Activated CD4-positive, alpha-beta memory T cell treated with anti-CD3 and anti-CD28 coated beads, Interleukin-2, amount 10 ng/mL, durations not matched to agents 7 days and 5 days (primary cell): ENCODE measurements at regions of chr1 and their contacts with region 1.

Region 1: DNA sequence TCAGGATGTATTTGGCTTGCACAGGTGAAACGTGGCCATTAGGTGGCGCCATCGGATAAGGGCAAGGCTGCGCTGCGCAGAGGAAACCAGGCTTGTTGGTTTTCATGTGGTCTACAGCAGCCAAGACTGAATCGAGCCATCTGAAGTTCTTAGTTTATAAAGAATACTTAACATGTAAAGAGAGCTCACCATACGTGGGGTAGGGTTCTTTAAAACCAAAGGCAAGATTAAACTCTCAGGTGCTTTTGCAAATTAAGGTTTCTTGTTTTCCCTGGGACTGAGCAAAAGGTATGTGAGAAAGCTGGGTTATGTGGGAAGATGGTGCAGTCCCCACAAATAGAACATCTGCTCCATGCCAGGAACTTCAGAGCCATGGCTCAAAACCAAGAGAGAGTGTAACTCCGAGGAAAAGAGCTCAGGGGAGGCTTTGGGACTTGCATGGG is 9.3 kb downstream of the MASP2 start:
- DNase-seq: peak; percentile 89
- H3K4me3 Mint-ChIP-seq: no peak overlapping the region
- H3K27ac Mint-ChIP-seq: no peak overlapping the region
- H3K4me1 Mint-ChIP-seq: peaks cover 8% of the 10 kb centered on the region
- H3K27me3 Mint-ChIP-seq: peaks cover 3% of the 10 kb centered on the region

Region 2: DNA sequence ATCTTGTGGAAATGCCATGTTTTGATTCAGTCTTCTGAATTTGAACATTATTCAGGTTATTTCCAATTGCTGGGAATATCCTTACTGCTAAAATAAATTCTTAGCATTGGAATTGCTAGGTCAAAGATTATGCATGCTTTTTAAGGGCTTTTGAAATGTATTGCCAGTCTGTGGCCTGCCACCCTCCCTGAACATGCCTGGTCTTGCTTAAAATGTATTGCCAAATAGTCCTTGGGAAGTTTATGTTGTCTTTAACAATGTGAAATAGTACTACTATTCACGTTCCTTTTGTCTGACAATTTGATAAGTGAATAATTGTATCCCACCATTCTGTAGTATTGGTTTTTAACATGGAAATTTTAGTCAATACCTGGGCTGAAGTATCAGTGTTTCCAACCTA is 11.7 kb before region 1 on chr1:
- CTCF ChIA-PET with region 1: interaction called, 15 read pairs
- POLR2A ChIA-PET with region 1: no interaction called
- DNase-seq: no peak
- H3K4me3 Mint-ChIP-seq: no peak overlapping the region
- H3K27ac Mint-ChIP-seq: no peak overlapping the region
- H3K4me1 Mint-ChIP-seq: peaks cover 21% of the 10 kb centered on the region
- H3K27me3 Mint-ChIP-seq: no peaks in the 10 kb centered on the region

Region 3: GRCh38 chr1:11059990-11060830 is 22.4 kb after region 1 on chr1 and contains the start of gene SRM:
- CTCF ChIA-PET with region 1: interaction called, 72 read pairs
- POLR2A ChIA-PET with region 1: interaction called, 18 read pairs
- DNase-seq: peak; percentile 92
- H3K4me3 Mint-ChIP-seq: peak within 1 kb of the TSS; percentile 97
- H3K27ac Mint-ChIP-seq: peak within 1 kb of the TSS; percentile 85
- H3K4me1 Mint-ChIP-seq: peaks cover 51% of the 10 kb centered on the region
- H3K27me3 Mint-ChIP-seq: no peaks in the 10 kb centered on the region
- total RNA-seq, gene SRM: 69.3 to 72.1 TPM

Region 4: GRCh38 chr1:11078631-11079030 is 40.9 kb after region 1 on chr1:
- CTCF ChIA-PET with region 1: interaction called, 20 read pairs
- POLR2A ChIA-PET with region 1: no interaction called
- DNase-seq: no peak
- H3K4me3 Mint-ChIP-seq: no peak overlapping the region
- H3K27ac Mint-ChIP-seq: no peak overlapping the region
- H3K4me1 Mint-ChIP-seq: no peaks in the 10 kb centered on the region
- H3K27me3 Mint-ChIP-seq: no peaks in the 10 kb centered on the region

Region 5: GRCh38 chr1:11109047-11109760 is 71.4 kb after region 1 on chr1:
- CTCF ChIA-PET with region 1: interaction called, 13 read pairs
- POLR2A ChIA-PET with region 1: no interaction called
- DNase-seq: no peak
- H3K4me3 Mint-ChIP-seq: no peak overlapping the region
- H3K27ac Mint-ChIP-seq: no peak overlapping the region
- H3K4me1 Mint-ChIP-seq: no peaks in the 10 kb centered on the region
- H3K27me3 Mint-ChIP-seq: no peaks in the 10 kb centered on the region

Region 6: DNA sequence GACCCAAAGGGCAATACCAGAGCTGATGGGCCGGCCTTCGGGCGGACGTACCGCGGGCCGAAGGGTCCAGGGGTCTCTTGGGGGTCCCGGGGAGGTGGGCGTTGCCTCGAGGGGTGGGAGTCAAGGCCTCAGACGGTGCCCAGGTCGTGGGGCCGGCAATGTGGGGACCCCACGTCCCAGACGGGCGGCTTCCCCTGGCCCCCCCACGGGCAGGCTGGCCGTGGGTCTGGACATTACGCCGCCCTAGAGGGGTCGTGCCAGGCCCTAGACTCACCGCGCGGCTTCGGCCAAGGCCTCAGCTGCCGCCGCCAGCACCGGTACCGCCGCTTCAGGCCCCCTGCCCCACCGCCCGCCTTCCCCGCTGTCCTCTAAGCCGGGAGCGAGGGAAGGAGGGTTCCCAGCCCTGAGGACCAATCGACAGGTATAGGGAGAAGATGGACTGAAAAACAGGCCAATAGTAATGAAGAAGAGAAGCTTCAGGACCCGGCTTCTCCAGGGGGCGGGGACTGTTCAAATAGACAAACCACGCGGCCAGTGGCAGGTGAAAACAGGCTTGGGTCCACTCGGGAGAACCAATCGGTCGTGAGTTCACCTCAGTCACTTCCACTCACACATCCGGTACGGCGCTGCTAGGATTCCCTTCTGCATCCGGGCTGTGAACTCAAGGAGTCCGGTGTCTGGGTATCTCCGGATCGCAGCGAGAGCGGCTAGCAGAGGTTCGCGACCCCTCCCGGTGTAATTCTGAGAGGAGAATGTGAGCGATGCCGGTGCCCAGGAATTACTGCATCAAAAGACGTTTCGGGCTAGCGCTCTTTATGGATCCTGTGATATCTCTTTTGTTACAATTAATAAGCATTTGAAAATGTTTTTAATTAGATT is 224.6 kb after region 1 on chr1 and contains the start of gene MTOR:
- CTCF ChIA-PET with region 1: interaction called, 10 read pairs
- POLR2A ChIA-PET with region 1: no interaction called
- DNase-seq: peak; percentile 98
- H3K4me3 Mint-ChIP-seq: peak within 1 kb of the TSS; percentile 85
- H3K27ac Mint-ChIP-seq: peak within 1 kb of the TSS; percentile 80
- H3K4me1 Mint-ChIP-seq: peaks cover 25% of the 10 kb centered on the region
- H3K27me3 Mint-ChIP-seq: no peaks in the 10 kb centered on the region
- total RNA-seq, gene MTOR: 32.9 to 36.2 TPM

Region 7: GRCh38 chr1:11719313-11720032 is 681.7 kb after region 1 on chr1:
- CTCF ChIA-PET with region 1: interaction called, 13 read pairs
- POLR2A ChIA-PET with region 1: no interaction called
- DNase-seq: peak; percentile 87
- H3K4me3 Mint-ChIP-seq: peak overlapping the region; percentile 56
- H3K27ac Mint-ChIP-seq: peak overlapping the region; percentile 85
- H3K4me1 Mint-ChIP-seq: peaks cover 19% of the 10 kb centered on the region
- H3K27me3 Mint-ChIP-seq: peaks cover 9% of the 10 kb centered on the region